Dendritic cell treated with granulocyte-macrophage colony-stimulating factor and Interleukin-4, amounts not matched to agents 40 ng/mL and 50 ng/mL, for 4 days (primary cell): ENCODE measurements at regions of chr3 and their contacts with region 1.

Region 1: DNA sequence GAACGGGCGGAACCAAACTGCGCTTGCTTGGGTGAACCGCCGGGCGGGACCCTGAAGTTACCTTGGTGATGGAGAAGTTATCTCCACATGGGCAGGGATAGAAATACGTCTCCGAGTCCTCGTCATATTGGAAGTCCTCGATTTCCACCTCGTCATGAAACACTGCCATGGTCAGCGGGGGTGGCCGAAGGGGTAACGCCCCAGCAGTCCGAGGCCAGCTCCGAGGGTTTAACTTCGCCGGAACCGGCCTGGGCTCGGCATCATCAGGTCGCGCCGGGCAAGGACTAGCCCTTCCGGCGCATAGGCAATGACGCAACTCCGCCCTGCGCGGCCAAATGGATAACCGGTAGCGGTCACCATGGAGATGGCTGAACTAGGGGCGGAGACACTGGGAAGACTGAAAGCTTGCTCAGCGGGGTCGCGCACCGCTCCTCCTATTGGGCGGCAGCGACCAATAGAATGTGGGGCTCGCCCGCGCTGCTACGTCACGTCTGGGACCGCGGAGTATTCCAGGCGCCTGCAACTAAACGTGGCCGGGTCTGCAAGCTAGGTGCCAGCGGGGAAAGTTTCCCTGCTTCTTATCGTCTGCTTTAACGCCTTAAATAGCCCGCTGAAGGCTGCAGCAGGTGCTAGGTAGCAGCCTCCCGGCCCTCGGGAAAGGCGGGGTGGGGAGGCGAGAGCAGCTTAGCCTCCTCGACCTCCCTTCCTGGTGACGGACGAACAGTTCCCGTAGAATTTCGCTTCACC is at the starts of genes DPH3 and OXNAD1:
- H3K4me3 Mint-ChIP-seq: peak within 1 kb of the TSS; percentile 93
- H3K27ac Mint-ChIP-seq: peak within 1 kb of the TSS; percentile 89
- H3K4me1 Mint-ChIP-seq: peaks cover 20% of the 10 kb centered on the region
- H3K27me3 Mint-ChIP-seq: no peaks in the 10 kb centered on the region

Region 2: GRCh38 chr3:16203031-16203430 is 61.9 kb before region 1 on chr3:
- intact Hi-C with region 1: no loop called
- H3K4me3 Mint-ChIP-seq: no peak overlapping the region
- H3K27ac Mint-ChIP-seq: no peak overlapping the region
- H3K4me1 Mint-ChIP-seq: no peaks in the 10 kb centered on the region
- H3K27me3 Mint-ChIP-seq: no peaks in the 10 kb centered on the region

Region 3: GRCh38 chr3:16329036-16329825 is 64.3 kb after region 1 on chr3:
- intact Hi-C with region 1: no loop called
- H3K4me3 Mint-ChIP-seq: no peak overlapping the region
- H3K27ac Mint-ChIP-seq: no peak overlapping the region
- H3K4me1 Mint-ChIP-seq: no peaks in the 10 kb centered on the region
- H3K27me3 Mint-ChIP-seq: no peaks in the 10 kb centered on the region

Region 4: GRCh38 chr3:16404349-16404895 is 139.5 kb after region 1 on chr3:
- intact Hi-C with region 1: no loop called
- H3K4me3 Mint-ChIP-seq: no peak overlapping the region
- H3K27ac Mint-ChIP-seq: peak overlapping the region; percentile 10
- H3K4me1 Mint-ChIP-seq: peaks cover 45% of the 10 kb centered on the region
- H3K27me3 Mint-ChIP-seq: no peaks in the 10 kb centered on the region

Region 5: DNA sequence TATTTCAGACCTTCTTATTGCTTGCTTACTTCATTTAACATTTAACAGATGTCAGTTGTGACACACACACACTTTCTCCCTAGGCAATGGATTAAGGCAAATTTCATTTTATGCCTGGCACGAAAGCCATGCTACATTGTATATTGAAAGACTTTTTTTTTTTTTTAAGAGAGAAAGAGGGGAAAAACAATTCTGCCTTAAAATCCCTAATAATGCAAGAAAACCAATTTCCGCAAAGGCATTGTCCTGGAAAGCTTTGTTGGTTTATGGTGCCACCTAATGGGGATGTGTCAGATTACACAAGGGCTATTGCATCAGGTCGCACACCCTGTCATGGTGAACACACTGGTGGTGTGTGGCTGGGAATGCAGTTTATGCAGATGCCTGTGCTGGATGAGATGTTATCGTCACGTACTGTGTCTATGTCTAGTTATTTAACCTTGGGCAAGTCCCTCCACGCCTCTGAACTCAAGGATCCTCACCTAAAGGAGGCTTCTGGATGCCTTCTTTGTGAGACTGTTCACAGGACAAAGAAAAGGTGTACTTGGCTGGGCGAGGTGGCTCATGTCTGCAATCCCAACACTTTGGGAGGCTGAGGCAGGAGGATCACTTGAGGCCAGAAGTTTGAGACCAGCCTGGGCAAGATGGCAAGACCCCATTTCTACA is 285.9 kb after region 1 on chr3:
- intact Hi-C with region 1: loop called (anchors 1 kb)
- H3K4me3 Mint-ChIP-seq: no peak overlapping the region
- H3K27ac Mint-ChIP-seq: no peak overlapping the region
- H3K4me1 Mint-ChIP-seq: peaks cover 5% of the 10 kb centered on the region
- H3K27me3 Mint-ChIP-seq: peaks cover 1% of the 10 kb centered on the region